ENCODE measurements at regions of chr6 and their contacts with region 1.

Region 1: GRCh38 chr6:139291813-139292619 is at the start of gene TXLNB:
- DNase-seq: peak; percentile 91
- H3K4me3 Mint-ChIP-seq: peak within 1 kb of the TSS; percentile 79
- H3K27ac Mint-ChIP-seq: peak within 1 kb of the TSS; percentile 95
- H3K4me1 Mint-ChIP-seq: peaks cover 67% of the 10 kb centered on the region
- H3K27me3 Mint-ChIP-seq: no peaks in the 10 kb centered on the region
- total RNA-seq, gene TXLNB: 0.10 to 0.14 TPM

Region 2: DNA sequence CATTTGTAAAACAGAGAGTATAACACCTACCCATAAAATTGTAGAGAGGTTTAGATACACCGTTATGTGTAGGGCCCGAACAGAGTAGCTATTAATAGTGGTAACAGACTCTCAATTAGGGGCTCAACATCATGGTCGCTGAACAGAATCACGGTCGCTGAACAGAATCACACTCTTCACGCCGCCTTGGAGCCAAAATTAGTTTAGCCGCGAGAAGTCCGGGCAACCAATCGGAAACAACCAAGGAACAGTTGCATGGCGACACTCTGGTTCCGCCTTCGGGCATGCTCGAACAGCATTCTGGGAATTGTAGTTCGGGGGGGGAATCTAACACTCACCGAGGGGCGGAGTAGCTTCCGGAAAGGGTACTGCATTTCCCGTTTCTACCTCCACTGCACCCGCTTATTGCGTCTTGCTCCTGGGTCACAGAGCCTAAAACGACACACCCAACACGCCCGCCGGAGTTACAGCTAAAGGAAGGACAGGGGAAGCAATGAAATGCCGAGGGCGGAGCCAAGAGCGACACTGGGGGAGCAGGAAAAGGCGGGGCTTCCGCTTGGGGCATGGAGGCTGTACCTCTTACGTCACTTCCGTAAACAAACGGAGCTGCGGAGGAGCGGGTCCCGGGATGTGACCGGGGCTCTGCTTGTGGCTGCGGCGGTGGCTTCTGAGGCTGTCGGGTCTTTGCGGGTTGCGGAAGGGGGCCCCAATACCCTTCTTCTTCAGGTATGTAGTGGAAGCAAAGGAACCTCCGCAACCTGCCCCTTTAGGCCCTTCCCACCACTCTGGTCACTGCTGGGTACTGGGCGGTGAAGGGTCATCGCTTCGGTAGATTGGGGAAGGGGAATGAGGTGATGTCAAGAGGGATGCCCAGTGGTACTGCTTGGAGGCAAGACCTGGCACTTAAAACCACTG is 518.6 kb before region 1 on chr6 and contains the start of gene CCDC28A:
- CTCF ChIA-PET with region 1: no interaction called
- intact Hi-C with region 1: loop called (anchors 1 kb)
- DNase-seq: peak; percentile 97
- H3K4me3 Mint-ChIP-seq: peak within 1 kb of the TSS; percentile 98
- H3K27ac Mint-ChIP-seq: peak within 1 kb of the TSS; percentile 100
- H3K4me1 Mint-ChIP-seq: peaks cover 30% of the 10 kb centered on the region
- H3K27me3 Mint-ChIP-seq: no peaks in the 10 kb centered on the region
- total RNA-seq, gene CCDC28A: 18.9 to 19.2 TPM

Region 3: GRCh38 chr6:139124887-139125672 is 166.9 kb before region 1 on chr6:
- CTCF ChIA-PET with region 1: interaction called, 4 read pairs
- intact Hi-C with region 1: loop called (anchors 1 kb)
- DNase-seq: peak; percentile 93
- H3K4me3 Mint-ChIP-seq: peak overlapping the region; percentile 54
- H3K27ac Mint-ChIP-seq: peak overlapping the region; percentile 94
- H3K4me1 Mint-ChIP-seq: peaks cover 56% of the 10 kb centered on the region
- H3K27me3 Mint-ChIP-seq: no peaks in the 10 kb centered on the region

Region 4: DNA sequence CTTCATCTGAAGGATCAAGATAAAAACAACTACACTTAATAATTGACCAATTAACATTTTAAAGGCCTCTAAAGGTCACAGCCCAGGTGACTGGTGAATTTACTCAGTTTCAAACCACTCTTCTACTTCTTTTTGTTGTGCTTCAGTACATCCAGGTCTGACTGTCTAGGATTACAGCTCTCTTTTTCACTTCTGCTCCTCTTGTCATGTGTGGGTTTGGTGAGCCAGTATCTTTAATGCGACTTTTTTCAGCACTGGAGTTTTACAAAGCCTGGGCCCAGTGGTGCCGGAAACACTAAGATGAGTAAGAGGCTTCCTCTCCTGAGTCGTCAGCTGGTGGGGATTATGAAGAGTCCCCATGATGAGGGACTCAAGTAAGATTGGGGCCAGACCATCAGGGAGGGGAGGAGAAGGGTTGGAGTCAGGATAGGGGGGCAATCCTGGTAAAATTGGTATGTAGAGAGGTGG is 130.2 kb before region 1 on chr6:
- CTCF ChIA-PET with region 1: no interaction called
- intact Hi-C with region 1: loop called (anchors 1 kb)
- DNase-seq: peak; percentile 88
- H3K4me3 Mint-ChIP-seq: peak overlapping the region; percentile 39
- H3K27ac Mint-ChIP-seq: peak overlapping the region; percentile 92
- H3K4me1 Mint-ChIP-seq: peaks cover 91% of the 10 kb centered on the region
- H3K27me3 Mint-ChIP-seq: no peaks in the 10 kb centered on the region

Region 5: GRCh38 chr6:139262519-139263300 is 29.3 kb before region 1 on chr6:
- CTCF ChIA-PET with region 1: interaction called, 7 read pairs
- intact Hi-C with region 1: loop called (anchors 1 kb)
- DNase-seq: peak; percentile 51
- H3K4me3 Mint-ChIP-seq: peak overlapping the region; percentile 65
- H3K27ac Mint-ChIP-seq: peak overlapping the region; percentile 88
- H3K4me1 Mint-ChIP-seq: peaks cover 23% of the 10 kb centered on the region
- H3K27me3 Mint-ChIP-seq: no peaks in the 10 kb centered on the region

Region 6: GRCh38 chr6:139364302-139364981 is 72.4 kb after region 1 on chr6:
- CTCF ChIA-PET with region 1: interaction called, 6 read pairs
- intact Hi-C with region 1: loop called (anchors 2 kb)
- DNase-seq: no peak
- H3K4me3 Mint-ChIP-seq: no peak overlapping the region
- H3K27ac Mint-ChIP-seq: no peak overlapping the region
- H3K4me1 Mint-ChIP-seq: peaks cover 26% of the 10 kb centered on the region
- H3K27me3 Mint-ChIP-seq: no peaks in the 10 kb centered on the region